Vagina (tissue), 2 donors: ENCODE measurements at regions of chr6 and their contacts with region 1.

Region 1: DNA sequence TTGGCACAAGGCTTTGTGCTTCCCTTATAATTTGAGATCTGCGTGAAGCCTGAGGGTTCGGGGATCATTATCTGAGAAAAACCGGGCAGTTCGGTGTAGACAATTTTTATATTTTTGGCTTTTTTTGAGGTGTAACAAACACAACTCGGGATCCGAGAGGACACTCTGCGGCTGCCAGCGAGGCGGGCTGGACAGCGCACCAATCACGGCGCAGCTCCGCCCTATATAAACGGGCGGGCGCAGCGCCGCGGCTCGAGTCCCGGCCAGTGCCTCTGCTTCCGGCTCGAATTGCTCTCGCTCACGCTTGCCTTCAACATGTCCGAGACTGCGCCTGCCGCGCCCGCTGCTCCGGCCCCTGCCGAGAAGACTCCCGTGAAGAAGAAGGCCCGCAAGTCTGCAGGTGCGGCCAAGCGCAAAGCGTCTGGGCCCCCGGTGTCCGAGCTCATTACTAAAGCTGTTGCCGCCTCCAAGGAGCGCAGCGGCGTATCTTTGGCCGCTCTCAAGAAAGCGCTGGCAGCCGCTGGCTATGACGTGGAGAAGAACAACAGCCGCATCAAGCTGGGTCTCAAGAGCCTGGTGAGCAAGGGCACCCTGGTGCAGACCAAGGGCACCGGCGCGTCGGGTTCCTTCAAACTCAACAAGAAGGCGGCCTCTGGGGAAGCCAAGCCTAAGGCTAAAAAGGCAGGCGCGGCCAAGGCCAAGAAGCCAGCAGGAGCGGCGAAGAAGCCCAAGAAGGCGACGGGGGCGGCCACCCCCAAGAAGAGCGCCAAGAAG is 69.0 kb downstream of the HFE start:
- DNase-seq: peak in 1 of 2 donors; percentile 96
- H3K4me3 ChIP-seq: peak overlapping the region; percentile 51 to 72
- H3K27ac ChIP-seq: peak overlapping the region; percentile 88
- H3K4me1 ChIP-seq: peaks cover 28% of the 10 kb centered on the region
- H3K27me3 ChIP-seq: no peaks in the 10 kb centered on the region
- CTCF ChIP-seq: no peak
- POLR2A ChIP-seq: peak in 1 of 2 donors; percentile 100

Region 2: GRCh38 chr6:26172496-26172958 is 16.3 kb after region 1 on chr6:
- intact Hi-C with region 1: loop called (anchors 2 kb)
- DNase-seq: no peak
- H3K4me3 ChIP-seq: peak overlapping the region; percentile 56 to 80
- H3K27ac ChIP-seq: peak overlapping the region; percentile 95
- H3K4me1 ChIP-seq: peaks cover 9% of the 10 kb centered on the region
- H3K27me3 ChIP-seq: no peaks in the 10 kb centered on the region
- CTCF ChIP-seq: no peak
- POLR2A ChIP-seq: peak in 1 of 2 donors; percentile 7

Region 3: GRCh38 chr6:26204332-26205165 is 48.3 kb after region 1 on chr6:
- intact Hi-C with region 1: loop called (anchors 1 kb)
- DNase-seq: peak in 1 of 2 donors; percentile 96
- H3K4me3 ChIP-seq: peak overlapping the region; percentile 53 to 60
- H3K27ac ChIP-seq: peak overlapping the region; percentile 75
- H3K4me1 ChIP-seq: peaks cover 8% of the 10 kb centered on the region
- H3K27me3 ChIP-seq: no peaks in the 10 kb centered on the region
- CTCF ChIP-seq: no peak
- POLR2A ChIP-seq: peak in 1 of 2 donors; percentile 90